ENCODE measurements at regions of chrX and their contacts with region 1.

Region 1: DNA sequence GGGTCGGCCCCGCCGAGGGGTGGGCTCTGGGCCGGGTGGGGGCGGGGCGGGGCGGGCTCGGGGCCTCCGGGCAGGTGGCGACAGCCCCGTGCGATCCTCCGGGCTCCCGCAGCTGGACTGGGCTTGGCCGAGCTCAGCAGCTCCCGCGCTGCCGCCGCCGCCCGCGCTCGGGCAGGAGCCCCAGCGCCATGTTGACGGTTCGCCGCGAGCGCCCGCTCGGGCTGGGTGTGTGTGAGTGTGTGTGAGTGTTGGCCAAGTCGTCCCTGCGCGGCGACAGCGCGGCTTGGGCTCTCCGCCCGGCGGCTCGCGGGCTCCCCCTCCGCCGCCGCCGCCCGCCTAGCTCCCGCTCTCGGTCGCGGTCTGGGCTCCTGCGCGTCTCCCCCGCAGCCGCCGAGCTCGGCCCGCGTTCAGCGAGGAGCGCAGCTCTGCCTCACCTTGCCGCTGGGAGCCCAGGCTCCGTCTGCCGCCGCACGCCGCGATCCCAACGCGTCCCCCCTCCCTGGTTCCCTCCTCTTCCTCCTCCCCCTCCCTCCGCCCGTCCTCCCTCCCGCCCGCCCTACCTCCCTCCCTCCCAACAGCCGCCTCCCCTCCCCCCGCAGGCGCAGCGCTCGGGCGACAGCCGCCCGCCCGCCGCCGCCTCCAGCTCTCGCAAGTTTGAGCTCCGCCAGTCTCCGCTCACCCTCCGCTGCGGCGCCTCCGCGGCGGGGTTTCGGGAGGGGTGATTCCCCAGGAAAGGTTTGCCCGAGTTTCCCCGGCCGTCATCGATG is at the start of gene BCOR:
- DNase-seq: peak; percentile 60
- H3K4me3 Mint-ChIP-seq: peak within 1 kb of the TSS; percentile 89
- H3K27ac Mint-ChIP-seq: peak within 1 kb of the TSS; percentile 88
- H3K4me1 Mint-ChIP-seq: peaks cover 18% of the 10 kb centered on the region
- H3K27me3 Mint-ChIP-seq: no peaks in the 10 kb centered on the region
- total RNA-seq, gene BCOR: 65.2 and 72.0 TPM in 2 replicates

Region 2: DNA sequence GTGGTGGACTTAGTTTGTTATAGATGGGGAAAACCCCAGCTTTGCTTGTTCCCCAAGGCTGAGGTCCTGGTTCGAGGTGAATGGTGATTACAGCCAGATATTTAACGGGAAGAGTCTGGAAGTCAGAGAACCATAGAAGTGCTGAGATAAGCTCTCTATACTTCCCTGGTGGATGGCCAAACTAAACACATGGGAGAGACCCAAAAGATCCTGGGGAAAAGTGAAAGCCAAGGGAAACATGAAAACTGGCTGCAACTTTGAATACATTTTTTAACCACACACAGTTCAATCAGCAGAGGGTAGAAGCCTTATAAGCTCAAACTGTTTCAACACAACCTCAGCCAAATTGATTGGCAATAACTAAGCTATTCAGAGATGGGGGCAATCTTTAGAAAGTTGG is 1847.7 kb before region 1 on chrX:
- intact Hi-C with region 1: no loop called
- DNase-seq: no peak
- H3K4me3 Mint-ChIP-seq: no peak overlapping the region
- H3K27ac Mint-ChIP-seq: no peak overlapping the region
- H3K4me1 Mint-ChIP-seq: no peaks in the 10 kb centered on the region
- H3K27me3 Mint-ChIP-seq: no peaks in the 10 kb centered on the region

Region 3: DNA sequence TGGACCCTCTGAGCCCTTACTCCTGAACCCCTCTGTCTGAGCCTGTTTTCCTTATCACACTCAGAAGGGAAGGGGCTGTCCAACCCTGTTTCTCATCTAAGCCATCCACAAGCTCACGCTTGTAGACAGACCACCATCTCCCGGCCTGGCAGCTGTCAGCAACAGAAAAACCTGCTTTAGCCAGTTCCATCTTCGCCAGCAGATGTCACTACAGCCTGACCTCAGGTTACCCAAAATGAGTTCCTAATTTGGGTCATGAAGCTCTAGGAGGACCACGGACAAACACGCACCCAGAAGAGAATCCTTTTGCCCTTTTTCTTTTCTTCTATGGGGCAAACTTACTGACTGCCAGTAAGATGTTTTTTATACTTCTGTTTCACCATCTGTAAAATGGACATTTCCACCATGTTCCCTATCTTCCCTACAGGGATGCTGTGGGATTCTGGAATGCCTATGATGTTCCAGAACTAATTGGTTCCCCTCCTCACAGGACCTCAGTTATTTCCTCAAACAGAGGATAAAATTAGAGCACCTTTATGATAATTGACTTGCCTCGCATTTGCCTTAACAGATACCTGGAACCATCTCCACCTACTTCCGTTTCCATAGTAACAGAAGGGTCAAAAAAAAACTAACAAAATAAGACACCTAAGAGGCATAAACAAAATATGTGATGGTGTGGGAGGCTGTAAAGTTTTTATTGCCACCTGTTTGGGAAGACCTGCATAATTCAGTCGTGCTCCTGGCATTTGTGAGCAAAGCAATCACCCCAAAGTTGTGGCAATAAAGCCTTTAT is 445.1 kb before region 1 on chrX:
- intact Hi-C with region 1: loop called (anchors 5 kb)
- DNase-seq: peak; percentile 1
- H3K4me3 Mint-ChIP-seq: no peak overlapping the region
- H3K27ac Mint-ChIP-seq: peak overlapping the region; percentile 13
- H3K4me1 Mint-ChIP-seq: peaks cover 7% of the 10 kb centered on the region
- H3K27me3 Mint-ChIP-seq: peaks cover 4% of the 10 kb centered on the region

Region 4: DNA sequence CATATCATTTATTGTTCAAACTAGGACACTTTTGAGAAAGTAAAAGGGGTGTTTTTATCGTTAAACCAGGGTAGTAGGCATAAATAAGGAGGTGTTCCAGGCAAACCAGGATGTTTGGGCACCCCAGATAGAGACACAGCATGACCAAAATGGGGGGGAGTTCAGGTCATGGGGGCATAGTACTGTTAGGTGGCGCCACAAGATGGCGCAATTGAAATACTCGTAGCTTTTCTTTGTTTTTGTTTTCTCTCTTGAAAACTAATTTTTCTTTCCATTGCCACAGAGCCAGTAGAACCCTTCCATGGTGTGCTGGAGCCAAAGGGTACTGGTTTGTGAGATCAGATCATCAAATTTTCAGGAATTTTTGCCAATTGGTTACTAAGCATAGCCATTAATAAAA is 283.3 kb before region 1 on chrX:
- intact Hi-C with region 1: loop called (anchors 2 kb)
- DNase-seq: peak; percentile 8
- H3K4me3 Mint-ChIP-seq: no peak overlapping the region
- H3K27ac Mint-ChIP-seq: no peak overlapping the region
- H3K4me1 Mint-ChIP-seq: peaks cover 42% of the 10 kb centered on the region
- H3K27me3 Mint-ChIP-seq: no peaks in the 10 kb centered on the region

Region 5: GRCh38 chrX:39883666-39884065 is 214.0 kb before region 1 on chrX:
- intact Hi-C with region 1: loop called (anchors 1 kb)
- DNase-seq: peak; percentile 12
- H3K4me3 Mint-ChIP-seq: peak overlapping the region; percentile 58
- H3K27ac Mint-ChIP-seq: peak overlapping the region; percentile 88
- H3K4me1 Mint-ChIP-seq: peaks cover 28% of the 10 kb centered on the region
- H3K27me3 Mint-ChIP-seq: peaks cover 9% of the 10 kb centered on the region

Region 6: GRCh38 chrX:39953883-39954282 is 143.8 kb before region 1 on chrX:
- intact Hi-C with region 1: no loop called
- DNase-seq: no peak
- H3K4me3 Mint-ChIP-seq: no peak overlapping the region
- H3K27ac Mint-ChIP-seq: no peak overlapping the region
- H3K4me1 Mint-ChIP-seq: peaks cover 11% of the 10 kb centered on the region
- H3K27me3 Mint-ChIP-seq: no peaks in the 10 kb centered on the region

Region 7: DNA sequence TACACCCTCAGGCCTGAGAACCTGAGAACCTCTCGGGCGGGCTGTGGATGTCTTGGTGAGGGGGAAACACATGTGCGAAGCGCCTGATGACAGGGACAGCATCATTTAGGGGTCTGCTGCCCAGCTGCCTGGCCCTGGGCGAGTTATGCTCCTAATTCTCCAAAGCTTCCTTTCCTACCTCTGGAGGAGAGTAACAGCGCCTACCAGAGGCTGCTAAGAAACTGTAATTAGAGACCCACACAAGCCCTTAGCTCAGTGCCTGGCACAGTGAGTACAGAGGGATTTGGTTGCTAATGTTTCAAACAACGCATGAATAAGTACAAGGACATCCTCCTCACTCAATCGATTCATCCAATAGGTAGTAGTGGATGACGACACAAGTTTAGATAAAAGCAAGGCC is 40.3 kb before region 1 on chrX:
- intact Hi-C with region 1: no loop called
- DNase-seq: no peak
- H3K4me3 Mint-ChIP-seq: no peak overlapping the region
- H3K27ac Mint-ChIP-seq: no peak overlapping the region
- H3K4me1 Mint-ChIP-seq: peaks cover 13% of the 10 kb centered on the region
- H3K27me3 Mint-ChIP-seq: no peaks in the 10 kb centered on the region

Region 8: GRCh38 chrX:40082447-40083119 is 15.1 kb before region 1 on chrX:
- intact Hi-C with region 1: no loop called
- DNase-seq: no peak
- H3K4me3 Mint-ChIP-seq: peak overlapping the region; percentile 68
- H3K27ac Mint-ChIP-seq: no peak overlapping the region
- H3K4me1 Mint-ChIP-seq: peaks cover 42% of the 10 kb centered on the region
- H3K27me3 Mint-ChIP-seq: no peaks in the 10 kb centered on the region

Region 9: DNA sequence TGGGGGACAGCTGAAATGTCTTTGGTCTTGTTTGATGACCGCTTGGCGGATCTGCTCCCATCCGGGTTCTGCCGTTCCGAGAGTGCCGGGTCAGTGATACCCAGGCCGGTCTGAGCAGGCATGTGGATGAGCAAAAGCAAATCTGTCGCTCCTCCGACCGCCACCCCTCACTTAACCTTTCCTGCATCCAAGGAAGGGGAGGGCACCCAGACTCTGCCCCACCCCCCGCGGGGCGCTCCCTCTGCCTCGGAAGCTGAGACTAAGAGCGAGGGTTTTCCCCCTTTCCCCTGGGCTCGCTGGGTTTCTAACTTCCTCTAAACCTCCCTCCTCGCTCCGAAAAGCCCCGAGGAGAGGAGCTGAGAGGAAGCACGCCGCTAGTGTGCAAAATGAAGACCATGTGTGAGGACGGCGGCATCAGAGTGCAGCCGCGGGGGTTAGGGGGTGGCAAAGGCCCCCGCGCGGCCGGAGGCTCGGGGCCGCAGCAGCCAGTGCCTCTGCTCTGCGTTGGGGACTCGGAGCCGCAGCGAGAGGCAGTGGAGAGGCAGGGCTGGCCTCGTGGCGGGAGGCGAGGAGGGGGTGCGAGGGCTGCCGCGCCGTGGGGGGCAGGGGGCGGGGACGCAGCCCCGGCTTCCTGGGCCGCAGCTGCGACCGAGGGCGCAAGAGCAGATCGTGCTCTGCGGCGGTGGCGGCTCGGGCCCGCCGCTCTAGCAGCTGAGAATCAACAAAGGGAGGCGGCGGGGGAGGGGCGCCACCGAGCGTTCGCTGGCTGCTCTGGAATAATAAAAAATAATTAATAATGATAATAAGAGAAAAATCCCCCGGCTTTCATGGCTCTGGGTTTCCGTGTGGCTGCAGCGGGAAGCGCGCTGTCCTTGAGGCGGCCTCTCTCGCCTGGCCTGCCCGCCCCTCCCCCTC is 55.9 kb after region 1 on chrX:
- intact Hi-C with region 1: loop called (anchors 2 kb)
- DNase-seq: peak; percentile 40
- H3K4me3 Mint-ChIP-seq: peak overlapping the region; percentile 81
- H3K27ac Mint-ChIP-seq: peak overlapping the region; percentile 86
- H3K4me1 Mint-ChIP-seq: peaks cover 12% of the 10 kb centered on the region
- H3K27me3 Mint-ChIP-seq: peaks cover under 1% of the 10 kb centered on the region

Region 10: GRCh38 chrX:40468033-40468846 is 370.6 kb after region 1 on chrX:
- intact Hi-C with region 1: loop called (anchors 5 kb)
- DNase-seq: peak; percentile 16
- H3K4me3 Mint-ChIP-seq: no peak overlapping the region
- H3K27ac Mint-ChIP-seq: peak overlapping the region; percentile 20
- H3K4me1 Mint-ChIP-seq: peaks cover 27% of the 10 kb centered on the region
- H3K27me3 Mint-ChIP-seq: peaks cover 4% of the 10 kb centered on the region